ENCODE measurements at regions of chr5 and their contacts with region 1.

Region 1: DNA sequence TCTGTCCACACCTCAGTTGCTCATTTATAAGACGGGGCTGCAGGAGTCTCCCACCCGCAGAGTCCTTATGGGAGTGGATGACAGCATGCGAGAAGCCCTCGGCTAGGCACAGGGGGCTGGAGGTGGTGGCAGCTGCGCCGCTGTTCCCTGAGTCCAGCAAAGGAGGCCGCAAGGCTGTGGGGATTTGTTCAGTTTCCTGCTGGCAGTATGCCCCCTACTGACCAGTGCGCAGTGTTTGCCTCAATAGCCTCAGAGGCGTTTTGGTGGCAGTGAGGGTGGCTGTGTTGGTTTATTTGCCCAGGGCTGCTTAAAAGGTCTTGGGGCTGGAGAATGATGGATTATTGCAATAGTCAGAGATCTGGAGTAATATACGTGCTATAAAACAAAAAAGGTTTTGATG is 176.3 kb upstream of the OTULINL start:
- DNase-seq: peak; percentile 70

Region 2: GRCh38 chr5:13045897-13046551 is 1359.2 kb before region 1 on chr5:
- intact Hi-C with region 1: loop called in 1 of 2 experiments (anchors 10 kb)
- DNase-seq: no peak

Measured in posterior vena cava (tissue), 2 donors.